ENCODE measurements at regions of chr5 and their contacts with region 1.

Region 1: GRCh38 chr5:139765409-139766217 is 30.0 kb upstream of the PSD2 start:
- DNase-seq: peak; percentile 74 to 76
- ATAC-seq: peak; percentile 79 to 93
- H3K4me3 ChIP-seq: peak overlapping the region; percentile 51
- H3K27ac ChIP-seq: peak overlapping the region; percentile 80 to 92
- H3K4me1 ChIP-seq: no peaks in the 10 kb centered on the region
- CTCF ChIP-seq: peak; percentile 99
- EP300 ChIP-seq: no peak
- POLR2A ChIP-seq: no peak
- RAD21 ChIP-seq: peak; percentile 78 to 94

Region 2: DNA sequence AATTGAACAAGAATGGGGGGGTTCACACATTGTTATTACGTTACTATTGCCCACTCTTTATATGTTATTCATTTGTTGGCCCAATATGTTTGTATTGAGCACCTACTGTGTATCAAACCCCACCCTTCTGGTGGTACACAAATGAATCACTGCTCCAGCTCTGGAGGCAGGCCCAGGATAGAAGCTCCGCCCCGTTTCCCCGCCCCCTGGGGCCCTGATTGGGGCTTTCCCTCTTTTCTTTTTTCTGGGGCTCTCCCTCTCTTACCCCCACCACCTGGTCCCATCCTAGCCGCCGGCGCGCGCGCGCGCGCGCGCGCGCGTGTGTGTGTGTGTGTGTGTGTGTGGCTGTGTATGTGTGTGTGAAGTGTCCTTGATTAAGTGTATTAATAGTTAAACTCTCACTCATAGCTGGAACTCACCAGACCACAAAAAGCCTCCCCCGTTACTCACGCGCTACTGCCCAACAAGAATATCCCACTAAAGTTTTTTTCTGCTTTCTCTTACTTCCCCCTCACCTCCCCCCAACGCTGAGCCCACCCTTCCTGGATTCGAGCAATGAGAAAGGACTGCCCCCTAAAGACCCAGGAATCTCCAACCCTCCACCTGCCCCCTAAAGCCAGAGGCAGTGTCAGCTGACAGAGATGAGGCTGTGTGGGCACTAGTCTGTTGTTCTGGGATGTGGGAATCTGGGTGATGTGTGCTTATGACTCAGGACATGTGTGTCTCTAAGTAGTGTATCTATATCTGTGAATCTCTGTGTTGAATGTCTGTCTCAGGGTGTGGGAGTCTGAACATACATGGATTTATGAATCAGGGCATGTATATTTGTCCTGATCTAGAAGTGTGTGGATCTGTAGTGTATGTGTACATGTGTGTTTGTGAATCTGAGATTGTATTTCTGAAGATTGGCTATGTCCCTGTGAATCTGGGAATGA is 113.5 kb before region 1 on chr5:
- CTCF ChIA-PET with region 1: interaction called, 10 read pairs
- POLR2A ChIA-PET with region 1: interaction called, 3 read pairs
- DNase-seq: peak; percentile 64 to 88
- ATAC-seq: peak; percentile 20 to 53; a peak in 3 of 6 replicates
- H3K4me3 ChIP-seq: peak overlapping the region; percentile 16; the same call in 2 of the 3 replicates
- H3K27ac ChIP-seq: peak overlapping the region; percentile 66 to 98
- H3K4me1 ChIP-seq: peaks cover 81% of the 10 kb centered on the region
- CTCF ChIP-seq: no peak
- EP300 ChIP-seq: no peak
- POLR2A ChIP-seq: no peak
- RAD21 ChIP-seq: no peak

Region 3: DNA sequence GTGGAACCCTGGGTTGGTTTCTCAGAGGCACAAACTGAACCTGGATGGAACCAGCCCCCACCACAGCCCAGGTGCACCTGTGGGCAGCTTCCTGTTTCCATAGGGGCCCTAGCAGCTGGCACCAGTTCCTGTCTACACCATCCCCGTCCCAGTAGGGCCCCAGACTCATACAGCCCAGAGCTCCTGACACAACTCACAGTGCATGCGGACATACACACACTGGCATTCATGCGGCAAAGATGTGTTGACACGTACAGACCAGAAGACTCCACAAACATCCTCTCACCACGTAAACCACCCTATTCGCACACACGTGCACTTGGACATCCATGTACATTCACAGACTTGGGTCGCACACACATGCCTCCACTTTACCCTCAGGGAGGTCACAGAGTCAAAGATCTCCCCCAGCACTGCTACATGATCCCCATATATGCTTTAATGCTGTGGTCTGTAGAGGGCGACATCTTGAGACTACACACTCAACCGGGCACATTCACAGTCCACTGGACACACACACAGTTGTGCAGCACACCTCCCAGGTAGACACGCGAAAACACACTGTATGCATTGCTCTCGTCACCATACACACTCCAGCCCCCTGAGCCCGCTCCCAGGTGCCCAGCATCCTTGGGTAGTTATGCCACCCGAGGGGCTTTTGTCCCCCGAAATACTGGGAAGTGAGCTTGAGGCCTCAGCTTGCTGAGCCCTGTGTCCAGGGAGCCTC is 95.1 kb before region 1 on chr5:
- CTCF ChIA-PET with region 1: interaction called, 12 read pairs
- POLR2A ChIA-PET with region 1: no interaction called
- DNase-seq: peak in 1 of 2 experiments; percentile 53
- ATAC-seq: peak in 1 of 2 experiments; percentile 59; a peak in 3 of 6 replicates
- H3K4me3 ChIP-seq: no peak overlapping the region
- H3K27ac ChIP-seq: peak overlapping the region in 1 of 2 experiments; percentile 51; a peak in 1 of 6 replicates
- H3K4me1 ChIP-seq: peaks cover 42% of the 10 kb centered on the region
- CTCF ChIP-seq: peak; percentile 26; the same call in 2 of the 3 replicates
- EP300 ChIP-seq: no peak
- POLR2A ChIP-seq: no peak
- RAD21 ChIP-seq: peak in 1 of 2 experiments; percentile 24; a peak in 1 of 5 replicates

Region 4: DNA sequence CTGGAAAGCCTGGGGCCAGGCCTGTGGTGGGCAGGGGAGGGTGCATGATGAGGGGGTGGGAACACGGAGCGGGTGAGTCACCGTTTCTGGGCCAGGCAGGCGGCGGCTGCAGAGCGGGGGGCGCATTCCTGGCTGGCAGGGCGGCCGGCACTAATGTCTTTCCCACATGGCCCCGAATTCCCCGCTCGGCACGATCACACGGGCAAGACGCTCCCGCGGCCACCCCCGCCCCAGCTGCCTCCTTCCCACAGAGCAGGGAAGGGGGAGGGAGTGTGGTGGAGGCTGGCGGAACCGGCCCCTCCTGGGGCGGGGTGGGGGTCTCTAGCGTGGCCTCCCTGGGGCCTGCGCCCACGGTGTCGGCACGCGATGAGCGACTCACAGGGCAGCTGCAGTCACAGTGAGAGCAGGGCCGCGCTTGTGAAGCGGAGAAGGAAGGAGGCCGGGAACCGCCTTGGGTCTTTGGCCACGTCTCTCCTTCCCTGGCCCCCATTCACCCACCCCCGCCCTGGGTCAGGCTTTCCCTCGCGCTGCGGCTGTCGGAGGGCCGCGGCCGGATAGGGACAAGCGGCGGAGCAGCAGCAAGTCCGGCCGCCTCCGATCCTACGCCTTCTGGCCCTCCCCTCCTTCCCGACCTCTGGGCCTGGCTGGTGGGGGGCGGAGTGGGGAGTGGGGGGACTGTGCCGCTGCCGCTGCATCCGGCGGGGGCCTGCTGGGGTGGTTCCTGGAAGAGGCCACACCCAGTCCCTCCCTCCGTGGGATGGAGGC is 68.5 kb before region 1 on chr5:
- CTCF ChIA-PET with region 1: interaction called, 40 read pairs
- POLR2A ChIA-PET with region 1: no interaction called
- DNase-seq: peak in 1 of 2 experiments; percentile 35
- ATAC-seq: peak in 1 of 2 experiments; percentile 18; a peak in 3 of 6 replicates
- H3K4me3 ChIP-seq: no peak overlapping the region
- H3K27ac ChIP-seq: peak overlapping the region; percentile 38 to 80; a peak in 4 of 6 replicates
- H3K4me1 ChIP-seq: peaks cover 41% of the 10 kb centered on the region
- CTCF ChIP-seq: no peak
- EP300 ChIP-seq: no peak
- POLR2A ChIP-seq: no peak
- RAD21 ChIP-seq: no peak

Region 5: DNA sequence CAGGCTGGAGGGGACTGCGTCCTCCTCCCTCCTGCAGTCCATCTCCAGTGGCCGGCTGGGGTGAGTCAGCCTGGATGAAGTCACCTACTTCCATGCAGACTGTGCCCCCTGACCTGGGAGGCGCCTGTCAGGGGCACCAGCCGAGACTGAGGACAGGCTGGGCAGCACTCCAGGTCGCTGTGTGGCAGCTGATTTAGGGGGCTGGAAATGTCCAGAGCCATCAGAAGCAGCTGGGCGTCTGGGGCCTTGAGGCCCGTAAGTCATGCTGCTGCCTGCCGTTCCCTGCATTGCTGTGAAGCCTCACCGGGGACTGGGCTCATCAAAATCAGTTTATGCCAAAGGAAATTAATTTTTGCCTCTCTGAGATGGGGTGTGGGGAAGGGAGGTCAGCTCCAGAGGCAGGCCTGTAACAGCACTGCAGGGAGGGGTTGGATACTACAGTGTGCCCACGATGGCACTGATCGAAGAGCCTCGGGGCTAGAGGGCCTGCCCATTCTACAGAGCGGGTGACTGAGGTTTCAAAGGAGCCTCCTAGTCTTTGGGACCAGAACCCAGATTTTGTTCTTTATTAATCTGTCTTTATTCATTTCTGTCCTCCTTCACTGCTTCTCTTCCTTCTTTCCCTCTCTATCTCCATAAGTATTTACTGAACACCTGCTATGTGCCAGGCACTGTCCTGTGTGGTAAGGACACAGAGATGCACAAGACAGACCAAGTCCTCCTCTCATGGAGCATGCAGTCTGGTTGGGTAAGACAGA is 40.4 kb before region 1 on chr5:
- CTCF ChIA-PET with region 1: interaction called, 12 read pairs
- POLR2A ChIA-PET with region 1: interaction called, 5 read pairs
- DNase-seq: peak in 1 of 2 experiments; percentile 73
- ATAC-seq: peak; percentile 94 to 97
- H3K4me3 ChIP-seq: no peak overlapping the region
- H3K27ac ChIP-seq: peak overlapping the region; percentile 52 to 78; a peak in 5 of 6 replicates
- H3K4me1 ChIP-seq: peaks cover 16% of the 10 kb centered on the region
- CTCF ChIP-seq: no peak
- EP300 ChIP-seq: no peak
- POLR2A ChIP-seq: no peak
- RAD21 ChIP-seq: no peak

Region 6: DNA sequence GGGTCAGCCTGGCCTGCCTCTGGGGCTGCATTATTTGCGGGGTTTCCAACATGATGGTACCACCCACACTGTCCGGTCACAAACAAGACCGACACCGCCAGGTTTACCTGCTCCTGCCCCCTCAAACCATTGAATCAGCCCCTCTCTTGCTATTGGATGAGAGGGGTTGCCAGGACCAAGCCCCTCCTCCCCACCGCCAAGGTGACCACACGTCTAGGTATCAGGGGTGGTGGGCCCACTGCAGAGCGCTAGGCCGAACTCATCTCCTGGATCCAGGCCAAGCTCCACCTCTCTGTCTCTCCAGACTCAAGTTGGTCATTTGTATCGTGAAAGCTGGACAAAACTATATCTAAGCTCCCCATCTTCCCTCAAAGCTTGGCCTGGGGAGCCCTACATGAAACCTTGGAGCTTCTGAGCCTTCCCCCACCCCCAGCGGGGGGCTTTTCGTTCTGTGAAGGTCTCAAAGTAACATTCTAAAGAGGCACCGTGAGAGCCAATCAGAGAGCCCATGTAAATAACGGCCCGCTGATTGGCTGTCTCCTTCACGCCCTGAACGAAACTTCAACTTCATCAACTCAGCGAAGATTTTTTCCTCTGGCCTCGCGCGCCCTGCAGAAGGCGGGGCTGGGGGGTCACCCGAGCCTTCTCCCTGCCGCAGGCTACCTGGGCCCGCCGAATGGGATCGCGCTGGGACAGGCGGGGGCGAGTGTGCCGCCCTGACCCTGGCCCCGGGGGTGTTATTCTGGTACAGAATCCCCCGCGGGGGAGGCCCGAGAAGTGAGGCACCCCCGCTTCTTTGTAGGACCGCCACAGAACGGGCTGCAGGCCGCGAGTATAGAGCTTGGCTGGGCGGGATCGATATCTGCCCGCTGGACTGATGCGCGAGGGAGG is 19.6 kb before region 1 on chr5:
- CTCF ChIA-PET with region 1: interaction called, 47 read pairs
- POLR2A ChIA-PET with region 1: no interaction called
- DNase-seq: peak; percentile 77 to 85
- ATAC-seq: peak; percentile 48 to 83
- H3K4me3 ChIP-seq: peak overlapping the region; percentile 40
- H3K27ac ChIP-seq: peak overlapping the region; percentile 75 to 89
- H3K4me1 ChIP-seq: peaks cover 44% of the 10 kb centered on the region
- CTCF ChIP-seq: no peak
- EP300 ChIP-seq: no peak
- POLR2A ChIP-seq: no peak
- RAD21 ChIP-seq: no peak